CD4-positive, alpha-beta memory T cell (primary cell): ENCODE measurements at regions of chr1 and their contacts with region 1.

Region 1: DNA sequence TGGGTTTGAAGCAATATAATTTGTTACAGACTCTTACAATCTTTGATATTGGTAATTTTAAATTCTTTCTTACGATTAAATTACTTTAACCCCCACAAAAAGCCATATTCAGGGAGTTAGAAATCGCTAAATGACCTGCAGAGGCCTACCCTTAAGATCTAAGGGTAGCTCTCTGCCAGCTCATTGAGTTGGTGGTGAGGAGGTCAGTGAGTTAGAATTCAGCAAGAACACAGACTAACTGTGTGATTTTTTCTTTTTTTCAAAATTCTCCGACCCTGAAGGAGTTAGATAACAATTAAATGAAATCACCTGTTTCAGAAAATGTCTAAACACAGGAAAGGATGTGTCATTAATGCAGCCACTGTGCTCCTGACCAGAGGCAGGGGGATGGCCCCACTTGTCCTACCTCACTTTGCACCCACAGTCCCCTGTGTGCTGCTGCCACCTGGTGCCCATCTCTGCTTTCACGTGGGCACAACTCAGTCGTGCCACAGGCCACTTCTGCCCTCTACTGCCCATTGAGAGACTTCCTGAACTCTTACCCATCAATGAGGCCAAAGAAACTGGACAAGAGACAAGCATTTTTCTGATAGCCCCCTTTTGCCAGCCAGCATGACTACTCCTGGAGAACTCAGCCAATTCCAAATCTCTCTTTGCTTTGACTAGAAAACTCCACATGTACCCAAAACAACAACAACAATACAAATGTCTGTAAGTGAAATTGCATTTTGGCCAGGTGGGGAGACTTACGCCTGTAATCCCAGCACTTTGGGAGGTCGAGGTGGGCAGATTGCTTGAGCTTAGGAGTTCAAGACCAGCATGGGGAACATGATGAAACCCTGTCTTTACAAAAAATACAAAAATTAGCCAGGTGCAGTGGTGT is 8.4 kb downstream of the CFAP45 start:
- DNase-seq: peak; percentile 67 to 74 (median 72)
- H3K4me3 ChIP-seq: no peak overlapping the region
- H3K4me3 Mint-ChIP-seq: no peak overlapping the region
- H3K27ac ChIP-seq: no peak overlapping the region
- H3K27ac Mint-ChIP-seq: peak overlapping the region in 3 of 7 donors; percentile 39 to 85 (median 68)
- H3K4me1 ChIP-seq: peaks cover 17% of the 10 kb centered on the region
- H3K4me1 Mint-ChIP-seq: peaks cover 13 to 22% (median 17%) of the 10 kb centered on the region in 4 donors
- H3K27me3 ChIP-seq: no peaks in the 10 kb centered on the region
- H3K27me3 Mint-ChIP-seq: no peaks in the 10 kb centered on the region

Region 2: GRCh38 chr1:159214149-159214760 is 677.3 kb before region 1 on chr1:
- CTCF ChIA-PET with region 1: interaction called, 10 read pairs
- POLR2A ChIA-PET with region 1: no interaction called
- intact Hi-C with region 1: no loop called
- DNase-seq: peak in 4 of 5 donors; percentile 12 to 27 (median 26)
- H3K4me3 ChIP-seq: no peak overlapping the region
- H3K4me3 Mint-ChIP-seq: no peak overlapping the region
- H3K27ac ChIP-seq: no peak overlapping the region
- H3K27ac Mint-ChIP-seq: no peak overlapping the region
- H3K4me1 ChIP-seq: no peaks in the 10 kb centered on the region
- H3K4me1 Mint-ChIP-seq: peaks cover 0 to 3% (median 0%) of the 10 kb centered on the region in 4 donors
- H3K27me3 ChIP-seq: peaks cover 7% of the 10 kb centered on the region
- H3K27me3 Mint-ChIP-seq: peaks cover 24 to 38% of the 10 kb centered on the region in 2 donors

Region 3: DNA sequence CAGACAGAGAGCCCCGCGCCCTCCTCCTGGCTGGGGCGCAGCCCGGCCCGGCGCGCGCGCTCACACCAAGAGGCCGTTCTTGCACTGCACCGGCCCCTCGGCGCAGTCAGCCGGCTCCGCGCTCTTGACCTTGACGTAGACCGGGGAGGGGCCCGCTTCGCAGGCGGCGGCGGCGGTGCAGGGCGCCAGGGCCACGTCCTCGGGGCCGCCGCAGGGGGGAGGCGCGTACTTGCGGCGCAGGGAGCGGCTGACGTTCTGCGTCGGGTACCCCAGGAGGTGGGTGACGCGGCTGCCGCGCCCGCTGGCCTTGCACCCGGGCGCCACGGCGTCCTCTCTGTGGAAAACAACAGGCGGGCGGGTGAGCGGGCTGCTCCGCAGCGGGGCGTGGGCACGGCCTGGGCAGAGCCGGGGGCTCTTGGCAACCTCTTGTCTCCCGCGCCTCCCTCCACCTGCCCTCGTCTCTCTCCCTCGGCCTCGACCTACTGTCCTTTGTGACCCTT is 36.8 kb before region 1 on chr1:
- CTCF ChIA-PET with region 1: interaction called, 6 read pairs
- POLR2A ChIA-PET with region 1: interaction called, 3 read pairs
- intact Hi-C with region 1: loop called (anchors 5 kb)
- DNase-seq: peak; percentile 66 to 75 (median 70)
- H3K4me3 ChIP-seq: peak overlapping the region; percentile 42 to 53
- H3K4me3 Mint-ChIP-seq: peak overlapping the region; percentile 83 to 95 (median 89)
- H3K27ac ChIP-seq: peak overlapping the region; percentile 38
- H3K27ac Mint-ChIP-seq: peak overlapping the region; percentile 33 to 93 (median 84)
- H3K4me1 ChIP-seq: peaks cover 14% of the 10 kb centered on the region
- H3K4me1 Mint-ChIP-seq: peaks cover 9 to 25% (median 14%) of the 10 kb centered on the region in 4 donors
- H3K27me3 ChIP-seq: no peaks in the 10 kb centered on the region
- H3K27me3 Mint-ChIP-seq: no peaks in the 10 kb centered on the region

Region 4: GRCh38 chr1:159916184-159917051 is 24.9 kb after region 1 on chr1:
- CTCF ChIA-PET with region 1: interaction called, 87 read pairs
- POLR2A ChIA-PET with region 1: interaction called, 62 read pairs
- intact Hi-C with region 1: no loop called
- DNase-seq: no peak
- H3K4me3 ChIP-seq: no peak overlapping the region
- H3K4me3 Mint-ChIP-seq: peak overlapping the region in 1 of 8 donors; percentile 21
- H3K27ac ChIP-seq: no peak overlapping the region
- H3K27ac Mint-ChIP-seq: peak overlapping the region; percentile 80 to 92 (median 87)
- H3K4me1 ChIP-seq: peaks cover 70% of the 10 kb centered on the region
- H3K4me1 Mint-ChIP-seq: peaks cover 52 to 89% (median 72%) of the 10 kb centered on the region in 4 donors
- H3K27me3 ChIP-seq: no peaks in the 10 kb centered on the region
- H3K27me3 Mint-ChIP-seq: no peaks in the 10 kb centered on the region

Region 5: DNA sequence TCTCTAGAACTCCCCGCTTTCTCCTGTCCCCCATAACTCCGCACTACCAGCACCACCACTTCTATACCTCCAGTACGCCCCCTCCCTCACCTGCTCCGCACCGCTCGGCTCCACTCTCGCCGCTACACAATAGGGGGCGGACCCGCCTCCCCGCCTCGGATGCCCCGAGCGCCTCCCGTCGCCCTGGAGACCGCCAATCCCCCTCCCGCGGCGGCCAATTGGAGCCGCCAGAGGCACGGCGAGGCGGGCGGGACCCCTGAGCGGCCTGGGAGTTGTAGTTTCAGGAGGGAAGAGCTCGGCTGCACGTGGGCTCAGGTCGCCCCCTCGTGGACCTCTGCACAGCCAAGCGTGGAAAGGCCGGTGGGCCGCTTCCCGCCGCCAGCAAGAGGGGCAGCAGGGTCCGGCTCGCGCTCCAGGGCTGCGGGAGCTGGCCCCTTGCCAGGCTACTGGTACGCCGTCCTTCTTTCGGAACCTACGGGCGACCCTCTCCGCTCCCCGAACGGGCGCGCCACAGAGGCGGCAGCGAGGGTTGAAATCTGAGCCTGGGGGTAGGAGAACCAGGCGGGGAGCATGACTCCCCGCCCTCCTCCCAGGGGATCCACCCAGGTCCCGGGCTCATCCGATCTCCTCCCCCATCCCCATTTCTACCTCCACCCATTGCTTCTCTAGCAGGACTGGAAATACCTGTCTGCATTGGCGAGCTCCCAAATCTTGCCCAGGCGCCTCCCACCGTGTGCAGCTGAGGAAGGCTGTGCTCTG is 54.1 kb after region 1 on chr1 and contains the start of gene IGSF9:
- CTCF ChIA-PET with region 1: interaction called, 18 read pairs
- POLR2A ChIA-PET with region 1: no interaction called
- intact Hi-C with region 1: loop called (anchors 2 kb)
- DNase-seq: peak; percentile 68 to 79 (median 71)
- H3K4me3 ChIP-seq: peak within 1 kb of the TSS in 1 of 2 donors; percentile 38
- H3K4me3 Mint-ChIP-seq: peak within 1 kb of the TSS; percentile 32 to 86 (median 68)
- H3K27ac ChIP-seq: no peak within 1 kb of the TSS
- H3K27ac Mint-ChIP-seq: peak within 1 kb of the TSS in 3 of 7 donors; percentile 12 to 87 (median 65)
- H3K4me1 ChIP-seq: peaks cover 13% of the 10 kb centered on the region
- H3K4me1 Mint-ChIP-seq: peaks cover 8 to 12% (median 10%) of the 10 kb centered on the region in 4 donors
- H3K27me3 ChIP-seq: peaks cover 21% of the 10 kb centered on the region
- H3K27me3 Mint-ChIP-seq: peaks cover 25 to 35% of the 10 kb centered on the region in 2 donors
- total RNA-seq, gene IGSF9: not detected